ENCODE measurements at regions of chr11 and their contacts with region 1.

Region 1: GRCh38 chr11:56783448-56784041 is 35.0 kb upstream of the OR9G4 start:
- DNase-seq: peak in 1 of 2 experiments; percentile 57
- H3K4me3 ChIP-seq: no peak overlapping the region
- H3K27ac ChIP-seq: no peak overlapping the region
- H3K4me1 ChIP-seq: 0 out of 2 replicates have a peak, but pooled peaks cover 3% of the 10 kb centered on the region
- H3K27me3 ChIP-seq: peaks cover 6% of the 10 kb centered on the region; the same call in 1 of the 2 replicates
- CTCF ChIP-seq: peak; percentile 87

Region 2: DNA sequence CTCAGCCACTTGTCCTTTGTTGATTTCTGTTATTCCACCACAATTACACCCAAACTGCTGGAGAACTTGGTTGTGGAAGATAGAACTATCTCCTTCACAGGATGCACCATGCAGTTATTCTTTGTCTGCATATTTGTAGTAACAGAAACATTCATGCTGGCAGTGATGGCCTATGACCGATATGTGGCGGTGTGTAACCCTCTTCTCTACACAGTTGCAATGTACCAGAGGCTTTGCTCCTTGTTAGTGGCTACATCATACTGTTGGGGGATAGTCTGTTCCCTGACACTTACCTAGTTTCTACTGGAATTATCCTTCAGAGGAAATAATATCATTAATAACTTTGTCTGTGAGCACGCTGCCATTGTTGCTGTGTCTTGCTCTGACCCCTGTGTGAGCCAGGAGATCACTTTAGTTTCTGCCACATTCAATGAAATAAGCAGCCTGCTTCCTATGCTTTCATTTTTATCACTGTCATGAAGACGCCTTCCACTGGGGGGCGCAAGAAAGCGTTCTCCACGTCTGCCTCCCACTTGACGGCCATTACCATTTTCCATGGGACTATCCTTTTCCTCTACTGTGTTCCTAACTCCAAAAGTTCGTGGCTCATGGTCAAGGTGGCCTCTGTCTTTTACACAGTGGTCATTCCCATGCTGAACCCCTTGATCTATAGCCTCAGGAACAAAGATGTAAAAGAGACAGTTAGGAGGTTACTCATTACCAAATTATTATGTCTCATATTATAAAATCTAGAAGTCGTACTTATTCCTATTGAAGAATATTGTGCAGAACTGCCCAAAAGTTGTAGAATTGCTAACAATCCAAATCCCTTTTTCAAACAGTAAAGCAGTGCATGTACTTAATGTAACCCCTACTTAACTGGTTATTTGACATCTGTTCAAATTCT is 1068.3 kb before region 1 on chr11:
- CTCF ChIA-PET with region 1: no interaction called
- POLR2A ChIA-PET with region 1: no interaction called
- intact Hi-C with region 1: loop called (anchors 10 kb)
- DNase-seq: peak in 1 of 2 experiments; percentile 10
- H3K4me3 ChIP-seq: no peak overlapping the region
- H3K27ac ChIP-seq: no peak overlapping the region
- H3K4me1 ChIP-seq: no peaks in the 10 kb centered on the region
- H3K27me3 ChIP-seq: no peaks in the 10 kb centered on the region
- CTCF ChIP-seq: peak; percentile 67

Region 3: DNA sequence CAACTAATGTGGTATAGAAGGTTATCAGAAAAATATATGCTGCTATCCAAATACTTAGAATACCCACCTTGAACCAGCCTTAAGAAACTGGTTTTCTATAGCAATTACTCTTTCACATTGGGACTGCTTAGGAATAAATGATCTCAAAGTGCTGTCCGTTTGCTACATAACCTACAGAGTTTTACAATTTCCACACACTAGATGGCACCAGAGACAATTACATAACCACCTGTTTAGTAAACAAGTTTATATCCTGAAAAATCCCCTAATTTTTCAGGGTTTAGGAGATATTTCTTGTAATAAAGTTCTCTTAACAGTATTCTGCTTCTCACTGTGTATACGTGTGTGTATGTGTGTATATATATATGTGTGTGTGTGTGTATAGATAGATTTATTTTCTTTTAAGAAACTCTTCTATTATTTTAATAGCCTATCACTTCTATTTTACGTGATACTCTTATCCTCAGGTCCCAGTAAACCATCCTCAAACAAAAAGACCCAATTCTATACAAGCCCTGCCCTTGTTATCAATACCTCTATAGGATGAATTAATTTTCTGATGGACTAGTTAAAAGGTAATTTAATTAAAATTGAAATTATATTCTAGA is 840.7 kb before region 1 on chr11:
- CTCF ChIA-PET with region 1: no interaction called
- POLR2A ChIA-PET with region 1: no interaction called
- intact Hi-C with region 1: loop called (anchors 2 kb)
- DNase-seq: peak in 1 of 2 experiments; percentile 49
- H3K4me3 ChIP-seq: no peak overlapping the region
- H3K27ac ChIP-seq: no peak overlapping the region
- H3K4me1 ChIP-seq: no peaks in the 10 kb centered on the region
- H3K27me3 ChIP-seq: no peaks in the 10 kb centered on the region
- CTCF ChIP-seq: peak; percentile 80

Region 4: GRCh38 chr11:56624661-56625110 is 158.9 kb before region 1 on chr11:
- CTCF ChIA-PET with region 1: no interaction called
- POLR2A ChIA-PET with region 1: no interaction called
- intact Hi-C with region 1: loop called (anchors 5 kb)
- DNase-seq: peak; percentile 5 to 69
- H3K4me3 ChIP-seq: no peak overlapping the region
- H3K27ac ChIP-seq: no peak overlapping the region
- H3K4me1 ChIP-seq: no peaks in the 10 kb centered on the region
- H3K27me3 ChIP-seq: peaks cover 10% of the 10 kb centered on the region; the same call in 1 of the 2 replicates
- CTCF ChIP-seq: peak; percentile 69

Region 5: DNA sequence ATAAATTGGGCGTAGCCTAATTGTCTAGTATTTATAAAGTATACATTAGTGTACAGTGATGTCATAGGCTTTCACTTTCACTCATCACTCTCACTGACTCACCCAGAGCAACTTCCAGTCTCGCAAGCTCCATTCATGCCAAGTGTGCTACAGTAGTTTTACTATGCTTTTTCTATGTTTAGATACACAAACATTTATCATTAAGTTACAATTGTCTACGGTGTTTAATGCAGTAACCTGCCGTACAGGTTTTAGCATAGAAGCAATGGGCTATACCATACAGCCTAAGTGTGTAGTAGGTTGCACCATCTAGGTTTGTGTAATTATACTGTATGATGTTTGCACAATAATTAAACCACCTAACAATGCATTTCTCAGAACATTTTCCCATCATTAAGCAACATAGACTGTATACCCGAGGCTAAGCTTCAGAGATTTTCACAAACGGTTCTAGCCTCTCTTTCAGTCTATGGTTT is 67.1 kb before region 1 on chr11:
- CTCF ChIA-PET with region 1: no interaction called
- POLR2A ChIA-PET with region 1: no interaction called
- intact Hi-C with region 1: no loop called
- DNase-seq: peak in 1 of 2 experiments; percentile 38
- H3K4me3 ChIP-seq: no peak overlapping the region
- H3K27ac ChIP-seq: no peak overlapping the region
- H3K4me1 ChIP-seq: peaks cover 4% of the 10 kb centered on the region; the same call in 1 of the 2 replicates
- H3K27me3 ChIP-seq: no peaks in the 10 kb centered on the region; the same call in 1 of the 2 replicates
- CTCF ChIP-seq: no peak